Activated CD4-positive, alpha-beta memory T cell treated with anti-CD3 and anti-CD28 coated beads, Interleukin-2, amount 10 ng/mL, durations not matched to agents 7 days and 5 days (primary cell): ENCODE measurements at regions of chr7 and their contacts with region 1.

Region 1: DNA sequence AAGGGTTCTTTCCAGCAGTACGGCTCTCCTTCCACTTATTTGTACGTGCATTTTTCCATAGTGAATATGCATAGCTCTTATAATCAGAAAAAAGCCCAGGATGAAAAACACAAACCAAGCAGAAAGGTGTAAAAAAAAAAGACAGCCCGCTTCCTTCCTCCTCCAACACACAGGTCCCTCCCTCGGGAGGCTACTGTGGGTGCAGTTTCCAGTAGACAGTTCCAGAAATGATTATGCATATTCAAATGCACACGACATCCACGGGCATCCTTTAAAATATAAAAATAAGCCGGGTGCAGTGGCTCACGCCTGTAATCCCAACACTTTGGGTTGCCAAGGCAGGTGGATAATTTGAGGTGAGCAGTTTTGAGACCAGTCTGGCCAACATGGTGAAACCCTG is 59.9 kb downstream of the TNRC18 start:
- DNase-seq: peak; percentile 30
- H3K4me3 Mint-ChIP-seq: peak overlapping the region; percentile 54
- H3K27ac Mint-ChIP-seq: peak overlapping the region; percentile 65
- H3K4me1 Mint-ChIP-seq: peaks cover 28% of the 10 kb centered on the region
- H3K27me3 Mint-ChIP-seq: no peaks in the 10 kb centered on the region

Region 2: DNA sequence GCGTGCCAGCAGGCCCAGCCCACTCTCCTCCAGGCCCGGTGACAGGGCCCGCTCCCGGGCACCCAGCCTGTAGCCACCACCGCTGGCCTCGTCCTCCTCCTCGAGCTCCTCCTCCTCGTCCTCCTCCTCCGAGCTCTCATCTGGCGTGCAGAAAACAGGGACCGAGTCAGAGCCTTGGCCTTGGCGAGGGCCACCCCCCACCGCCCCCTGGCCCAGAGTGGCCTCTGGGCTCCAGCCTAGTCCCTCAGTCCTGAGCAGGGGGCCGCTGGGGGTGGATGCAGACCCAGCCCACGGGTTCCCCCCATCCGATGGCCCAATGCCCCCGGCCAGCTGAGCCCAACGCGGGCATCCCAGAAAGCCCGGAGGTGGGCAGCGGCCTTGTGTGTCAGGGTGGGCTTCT is 18.1 kb before region 1 on chr7:
- CTCF ChIA-PET with region 1: no interaction called
- POLR2A ChIA-PET with region 1: no interaction called
- DNase-seq: no peak
- H3K4me3 Mint-ChIP-seq: no peak overlapping the region
- H3K27ac Mint-ChIP-seq: no peak overlapping the region
- H3K4me1 Mint-ChIP-seq: no peaks in the 10 kb centered on the region
- H3K27me3 Mint-ChIP-seq: no peaks in the 10 kb centered on the region

Region 3: DNA sequence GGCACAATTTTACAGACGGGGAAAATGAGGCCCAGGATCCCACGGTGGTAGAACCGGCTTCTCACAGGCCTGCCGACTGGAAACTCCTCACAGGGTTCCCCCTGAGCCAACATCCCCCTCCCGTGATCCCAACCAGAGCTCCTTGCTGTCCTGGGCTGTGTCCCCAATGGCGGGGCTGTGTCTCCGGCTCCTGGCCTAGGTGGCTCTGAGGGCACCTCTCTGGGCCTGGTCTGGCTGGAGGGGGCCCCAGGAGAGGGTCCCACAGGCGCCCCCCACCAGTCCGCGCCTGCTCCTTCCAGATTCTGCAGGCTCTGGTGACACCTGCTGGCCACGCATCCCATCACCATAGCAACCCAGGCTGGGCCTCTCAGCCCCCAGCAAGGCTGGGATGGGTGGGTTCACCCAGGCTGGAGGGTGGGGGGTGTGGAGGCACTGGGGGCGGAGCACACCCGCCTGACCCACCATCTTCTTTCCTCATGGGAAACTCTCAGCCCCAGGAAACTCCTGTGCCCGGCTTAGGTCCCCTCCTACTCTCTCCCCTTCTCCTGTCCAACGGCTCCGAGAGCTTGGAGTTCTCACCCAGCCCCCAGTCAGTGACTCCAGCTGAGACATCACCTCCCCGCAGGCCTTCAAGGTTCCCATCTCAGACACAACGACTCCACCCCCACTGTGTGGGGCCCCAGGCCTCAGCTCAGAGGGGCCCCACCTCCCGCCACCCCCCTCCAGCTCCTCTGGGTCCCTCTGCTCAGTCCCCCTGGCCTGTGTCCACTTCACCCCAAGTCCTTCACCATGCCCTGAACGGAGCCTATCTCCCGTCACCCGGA is 87.0 kb after region 1 on chr7:
- CTCF ChIA-PET with region 1: interaction called, 11 read pairs
- POLR2A ChIA-PET with region 1: no interaction called
- DNase-seq: peak; percentile 27
- H3K4me3 Mint-ChIP-seq: no peak overlapping the region
- H3K27ac Mint-ChIP-seq: no peak overlapping the region
- H3K4me1 Mint-ChIP-seq: no peaks in the 10 kb centered on the region
- H3K27me3 Mint-ChIP-seq: peaks cover 1% of the 10 kb centered on the region